ENCODE measurements at regions of chr2 and their contacts with region 1.

Region 1: GRCh38 chr2:42169100-42169873 is at the start of gene EML4:
- DNase-seq: peak; percentile 98
- H3K4me3 Mint-ChIP-seq: no peak within 1 kb of the TSS
- H3K27ac Mint-ChIP-seq: peak within 1 kb of the TSS; percentile 23
- H3K4me1 Mint-ChIP-seq: peaks cover 18% of the 10 kb centered on the region
- H3K27me3 Mint-ChIP-seq: peaks cover 5% of the 10 kb centered on the region
- total RNA-seq, gene EML4: 51.3 and 54.9 TPM in 2 replicates

Region 2: DNA sequence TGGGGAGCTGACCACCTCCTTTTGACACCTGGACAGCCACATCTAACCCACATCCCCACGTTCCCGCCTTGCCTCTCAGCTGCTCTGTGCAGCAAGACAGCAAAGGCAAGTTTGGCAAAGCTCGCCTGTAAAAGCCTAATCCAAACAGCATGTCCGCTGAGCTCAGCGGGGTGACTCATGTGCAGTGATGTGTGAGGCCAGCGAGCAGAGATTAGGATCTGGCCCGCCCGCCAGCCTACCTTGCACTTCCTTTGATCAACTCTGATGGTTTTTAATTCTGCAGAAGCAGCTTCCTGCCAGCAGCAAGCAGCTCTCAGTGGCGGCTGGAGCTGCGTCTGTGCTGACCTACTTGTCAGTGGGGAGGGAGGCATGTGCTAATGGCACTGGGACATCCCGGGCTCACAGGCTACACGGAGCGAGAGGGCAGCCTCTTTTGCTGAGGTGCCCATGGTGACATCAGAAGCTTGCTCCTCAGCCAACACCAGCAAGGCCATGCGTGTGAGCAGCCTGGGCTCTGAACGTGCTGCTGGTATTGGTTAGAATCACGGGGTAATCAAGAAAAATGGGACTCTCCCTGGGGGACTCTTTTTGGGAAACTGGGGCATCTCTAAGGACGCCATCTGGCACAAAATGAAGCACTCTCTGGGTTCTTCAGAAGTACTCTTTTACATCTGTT is 36.2 kb before region 1 on chr2:
- intact Hi-C with region 1: loop called (anchors 1 kb)
- DNase-seq: peak; percentile 96
- H3K4me3 Mint-ChIP-seq: peak overlapping the region; percentile 78
- H3K27ac Mint-ChIP-seq: peak overlapping the region; percentile 91
- H3K4me1 Mint-ChIP-seq: peaks cover 76% of the 10 kb centered on the region
- H3K27me3 Mint-ChIP-seq: no peaks in the 10 kb centered on the region

Region 3: GRCh38 chr2:42196403-42197267 is 27.3 kb after region 1 on chr2:
- intact Hi-C with region 1: loop called (anchors 1 kb)
- DNase-seq: peak; percentile 80
- H3K4me3 Mint-ChIP-seq: no peak overlapping the region
- H3K27ac Mint-ChIP-seq: no peak overlapping the region
- H3K4me1 Mint-ChIP-seq: peaks cover 50% of the 10 kb centered on the region
- H3K27me3 Mint-ChIP-seq: no peaks in the 10 kb centered on the region

Region 4: DNA sequence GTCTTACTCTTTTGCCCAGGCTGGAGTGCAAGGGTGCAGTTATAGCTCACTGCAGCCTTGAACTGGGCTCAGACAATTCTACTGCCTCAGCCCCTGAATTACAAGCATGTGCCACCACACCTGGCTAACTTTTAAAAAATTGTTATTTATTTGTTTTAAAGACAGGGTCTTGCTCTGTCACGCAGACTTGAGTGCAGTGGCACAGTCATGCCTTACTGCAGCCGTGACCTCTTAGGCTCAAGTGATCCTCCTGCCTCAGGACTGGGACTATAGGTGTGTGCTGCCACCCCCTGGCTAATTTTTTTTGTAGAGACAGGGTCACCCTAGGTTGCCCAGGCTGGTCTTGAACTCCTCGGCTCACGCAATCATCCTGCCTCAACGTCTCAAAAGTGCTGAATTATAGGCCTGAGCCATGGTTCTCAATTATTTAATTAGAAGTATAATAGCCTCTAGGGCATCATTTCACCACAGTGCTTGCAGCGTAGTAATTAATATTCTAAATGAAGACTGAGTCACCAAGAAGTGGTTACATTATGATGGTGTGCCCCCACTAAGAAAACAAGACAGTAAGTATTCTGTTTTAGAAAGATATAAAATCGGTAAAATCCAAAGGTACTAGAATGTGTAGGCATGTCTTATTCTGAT is 69.5 kb after region 1 on chr2:
- intact Hi-C with region 1: loop called (anchors 5 kb)
- DNase-seq: peak; percentile 72
- H3K4me3 Mint-ChIP-seq: no peak overlapping the region
- H3K27ac Mint-ChIP-seq: no peak overlapping the region
- H3K4me1 Mint-ChIP-seq: peaks cover 24% of the 10 kb centered on the region
- H3K27me3 Mint-ChIP-seq: no peaks in the 10 kb centered on the region